Common myeloid progenitor, CD34-positive (primary cell): ENCODE measurements at regions of chr14 and their contacts with region 1.

Region 1: DNA sequence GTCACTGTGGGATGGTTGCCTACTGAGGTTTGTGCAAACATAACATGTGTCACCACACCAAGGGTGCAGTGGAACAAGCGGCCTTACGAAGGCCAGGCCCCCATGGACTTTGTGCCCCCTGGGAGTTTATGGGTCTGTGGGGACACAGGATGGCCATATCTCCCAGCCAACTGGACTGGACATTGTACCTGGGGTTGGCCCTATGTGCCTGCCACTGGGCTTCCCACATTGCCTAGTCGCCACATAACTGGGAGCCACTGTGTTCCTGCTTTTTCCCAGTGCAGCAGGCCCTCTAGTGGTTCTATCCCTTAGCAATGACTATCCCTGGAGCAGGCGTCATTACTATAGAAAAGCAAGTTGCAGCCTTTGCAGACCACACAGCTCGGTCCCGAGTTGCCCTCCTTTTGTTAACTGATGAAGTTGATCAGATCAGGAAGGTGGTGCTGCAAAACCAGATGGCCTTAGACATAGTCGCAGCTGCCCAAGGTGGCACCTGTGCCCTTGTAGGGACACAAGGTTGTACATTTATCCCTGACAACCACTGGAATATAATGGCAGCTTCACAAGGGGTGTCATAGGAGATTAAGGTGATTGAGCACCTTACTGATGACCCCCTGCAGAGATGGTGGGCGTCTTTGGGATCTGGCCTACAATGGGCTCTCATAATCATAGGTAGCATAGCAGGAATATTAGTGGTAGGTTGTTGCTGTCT is 15.2 kb upstream of the RNASE12 start:
- DNase-seq: no peak
- H3K4me3 ChIP-seq: no peak overlapping the region
- H3K27ac ChIP-seq: no peak overlapping the region
- H3K4me1 ChIP-seq: peaks cover 4 to 13% (median 6%) of the 10 kb centered on the region in 4 experiments
- H3K27me3 ChIP-seq: no peaks in the 10 kb centered on the region

Region 2: GRCh38 chr14:20503898-20504297 is 102.4 kb before region 1 on chr14:
- CTCF ChIA-PET with region 1: no interaction called
- POLR2A ChIA-PET with region 1: no interaction called
- DNase-seq: no peak
- H3K4me3 ChIP-seq: no peak overlapping the region
- H3K27ac ChIP-seq: no peak overlapping the region
- H3K4me1 ChIP-seq: peaks cover 0 to 5% (median 2%) of the 10 kb centered on the region in 4 experiments
- H3K27me3 ChIP-seq: no peaks in the 10 kb centered on the region

Region 3: DNA sequence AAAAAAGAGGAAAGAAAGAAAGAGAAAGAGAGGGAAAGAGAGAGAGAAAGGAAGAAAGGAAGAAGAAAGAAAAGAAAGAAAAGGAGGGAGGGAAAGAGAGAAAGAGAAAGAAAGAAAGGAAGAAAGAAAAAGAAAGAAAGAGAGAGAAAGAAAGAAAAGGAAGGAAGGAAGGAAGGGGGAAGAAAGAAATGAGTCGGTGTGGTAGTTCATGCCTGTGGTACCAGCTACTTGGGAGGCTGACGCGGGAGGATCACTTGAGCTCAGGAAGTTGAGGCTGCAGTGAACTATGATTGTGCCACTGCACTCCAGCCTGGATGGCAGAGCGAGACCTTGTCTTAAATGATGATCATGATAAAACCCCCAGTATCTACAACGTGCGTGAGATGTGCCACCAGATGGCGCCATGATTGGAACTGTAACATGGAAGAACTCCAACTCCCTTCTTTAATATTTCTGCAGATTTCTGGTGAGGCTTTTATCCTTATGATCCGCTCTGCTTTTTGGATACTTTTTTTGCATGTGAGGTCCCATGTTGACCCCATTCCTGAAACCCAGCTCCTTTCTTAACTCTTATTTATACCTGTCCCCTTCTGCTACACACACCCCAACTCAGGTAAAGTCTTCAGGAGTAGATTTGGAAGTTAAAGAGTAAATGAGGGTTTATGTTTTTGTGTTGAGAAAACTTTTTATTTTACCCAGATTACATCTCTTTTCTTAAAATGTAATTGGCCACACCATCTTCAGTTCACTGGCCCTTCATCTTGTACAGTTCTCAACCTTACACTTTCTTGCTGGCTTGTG is 75.4 kb before region 1 on chr14:
- CTCF ChIA-PET with region 1: interaction called, 24 read pairs
- POLR2A ChIA-PET with region 1: no interaction called
- DNase-seq: peak; percentile 85 to 92 (median 89)
- H3K4me3 ChIP-seq: no peak overlapping the region
- H3K27ac ChIP-seq: no peak overlapping the region
- H3K4me1 ChIP-seq: peaks cover 0 to 12% (median 0%) of the 10 kb centered on the region in 4 experiments
- H3K27me3 ChIP-seq: no peaks in the 10 kb centered on the region

Region 4: GRCh38 chr14:20652996-20653975 is 46.9 kb after region 1 on chr14:
- CTCF ChIA-PET with region 1: no interaction called
- POLR2A ChIA-PET with region 1: no interaction called
- DNase-seq: peak; percentile 55 to 67 (median 63)
- H3K4me3 ChIP-seq: peak overlapping the region in 4 of 7 experiments; percentile 38 to 50 (median 46)
- H3K27ac ChIP-seq: no peak overlapping the region
- H3K4me1 ChIP-seq: peaks cover 0 to 10% (median 3%) of the 10 kb centered on the region in 4 experiments
- H3K27me3 ChIP-seq: peaks cover 22 to 66% (median 40%) of the 10 kb centered on the region in 5 experiments

Region 5: DNA sequence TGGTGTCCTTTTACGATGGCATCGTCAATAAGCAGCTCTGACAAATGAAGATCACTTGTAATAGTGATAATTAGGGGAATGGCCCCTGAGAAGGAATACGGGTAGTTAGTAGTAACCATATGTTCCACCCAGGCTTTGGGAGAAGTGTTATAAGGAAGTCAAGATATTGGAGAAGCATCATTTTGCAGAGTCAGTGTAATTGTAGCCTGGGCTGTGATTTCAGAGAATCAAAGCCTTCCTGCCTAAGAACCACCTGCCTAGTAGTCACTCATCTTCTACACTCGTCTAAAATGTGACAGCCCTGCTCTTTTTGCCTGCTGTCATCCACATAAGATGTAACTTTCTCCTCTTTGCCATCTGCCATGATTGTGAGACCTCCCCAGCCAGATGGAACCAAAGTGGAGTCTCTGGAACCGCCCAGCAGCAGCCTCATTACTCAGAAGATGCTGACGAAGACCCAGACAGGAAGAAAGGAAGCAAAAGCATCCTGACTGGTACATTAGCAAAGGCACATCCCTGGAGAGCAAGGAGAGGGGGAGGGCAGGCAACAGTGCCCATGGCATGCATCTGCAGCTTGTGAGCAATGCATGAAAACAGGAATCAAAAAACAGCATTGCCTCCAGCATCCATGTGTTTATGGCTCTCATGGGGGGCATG is 126.8 kb after region 1 on chr14:
- CTCF ChIA-PET with region 1: no interaction called
- POLR2A ChIA-PET with region 1: no interaction called
- DNase-seq: no peak
- H3K4me3 ChIP-seq: no peak overlapping the region
- H3K27ac ChIP-seq: no peak overlapping the region
- H3K4me1 ChIP-seq: no peaks in the 10 kb centered on the region
- H3K27me3 ChIP-seq: no peaks in the 10 kb centered on the region

Region 6: DNA sequence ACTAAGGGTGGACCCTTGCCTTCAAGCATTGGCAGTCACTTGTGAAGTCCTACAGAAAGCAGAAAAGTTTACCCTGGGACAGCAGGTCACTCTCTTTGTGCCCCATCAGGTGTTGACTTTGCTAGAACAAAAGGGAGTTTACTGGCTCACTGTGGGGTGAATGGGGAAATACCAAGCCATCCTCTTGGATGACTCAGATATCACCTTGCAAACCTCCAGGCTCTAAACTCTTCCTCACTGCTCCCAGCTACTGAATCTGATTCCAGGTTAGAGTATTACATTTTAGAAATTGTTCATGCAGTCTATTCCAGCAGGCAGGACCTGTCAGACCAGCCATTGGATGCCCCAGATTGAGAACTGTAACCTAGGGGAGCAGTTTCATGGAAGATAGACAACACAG is 154.6 kb after region 1 on chr14:
- CTCF ChIA-PET with region 1: no interaction called
- POLR2A ChIA-PET with region 1: no interaction called
- DNase-seq: no peak
- H3K4me3 ChIP-seq: no peak overlapping the region
- H3K27ac ChIP-seq: no peak overlapping the region
- H3K4me1 ChIP-seq: peaks cover 0 to 17% (median 0%) of the 10 kb centered on the region in 4 experiments
- H3K27me3 ChIP-seq: no peaks in the 10 kb centered on the region